ENCODE measurements at regions of chr2 and their contacts with region 1.

Region 1: DNA sequence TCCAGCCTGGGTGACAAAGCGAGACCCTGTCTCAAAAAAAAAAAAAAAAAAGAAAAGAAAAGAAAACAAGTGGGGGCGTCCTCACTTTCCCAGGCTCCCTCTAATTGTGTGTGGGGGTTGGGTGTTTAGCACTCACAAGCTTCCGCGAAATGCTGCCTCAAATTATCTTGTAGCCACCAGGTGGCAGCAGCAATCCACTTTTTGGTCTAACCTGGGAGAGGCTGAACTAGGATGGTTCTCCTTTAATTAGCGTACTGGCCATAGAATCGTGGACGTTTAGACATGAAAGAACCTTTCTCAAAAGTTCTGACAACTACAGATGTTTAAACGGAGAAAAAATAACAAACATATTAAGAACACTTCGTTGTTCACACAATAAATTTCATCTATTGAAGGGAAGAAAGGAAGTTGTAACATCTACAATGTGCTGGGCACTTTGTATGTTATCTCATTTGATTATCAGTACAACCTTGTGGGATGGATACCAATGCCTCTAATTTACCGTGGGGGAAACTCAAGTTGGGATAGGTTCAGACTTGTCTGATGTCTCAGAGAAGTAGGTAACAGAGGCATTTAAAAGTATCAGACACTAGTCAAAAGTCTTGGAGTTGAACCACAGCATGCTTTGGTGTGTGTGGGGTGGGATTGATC is 122.7 kb upstream of the NABP1 start:
- DNase-seq: peak; percentile 58 to 65
- H3K4me3 ChIP-seq: peak overlapping the region; percentile 26; the same call in 1 of the 2 replicates
- H3K27ac ChIP-seq: no peak overlapping the region
- H3K4me1 ChIP-seq: peaks cover 4% of the 10 kb centered on the region
- H3K27me3 ChIP-seq: no peaks in the 10 kb centered on the region
- CTCF ChIP-seq: peak; percentile 78

Region 2: DNA sequence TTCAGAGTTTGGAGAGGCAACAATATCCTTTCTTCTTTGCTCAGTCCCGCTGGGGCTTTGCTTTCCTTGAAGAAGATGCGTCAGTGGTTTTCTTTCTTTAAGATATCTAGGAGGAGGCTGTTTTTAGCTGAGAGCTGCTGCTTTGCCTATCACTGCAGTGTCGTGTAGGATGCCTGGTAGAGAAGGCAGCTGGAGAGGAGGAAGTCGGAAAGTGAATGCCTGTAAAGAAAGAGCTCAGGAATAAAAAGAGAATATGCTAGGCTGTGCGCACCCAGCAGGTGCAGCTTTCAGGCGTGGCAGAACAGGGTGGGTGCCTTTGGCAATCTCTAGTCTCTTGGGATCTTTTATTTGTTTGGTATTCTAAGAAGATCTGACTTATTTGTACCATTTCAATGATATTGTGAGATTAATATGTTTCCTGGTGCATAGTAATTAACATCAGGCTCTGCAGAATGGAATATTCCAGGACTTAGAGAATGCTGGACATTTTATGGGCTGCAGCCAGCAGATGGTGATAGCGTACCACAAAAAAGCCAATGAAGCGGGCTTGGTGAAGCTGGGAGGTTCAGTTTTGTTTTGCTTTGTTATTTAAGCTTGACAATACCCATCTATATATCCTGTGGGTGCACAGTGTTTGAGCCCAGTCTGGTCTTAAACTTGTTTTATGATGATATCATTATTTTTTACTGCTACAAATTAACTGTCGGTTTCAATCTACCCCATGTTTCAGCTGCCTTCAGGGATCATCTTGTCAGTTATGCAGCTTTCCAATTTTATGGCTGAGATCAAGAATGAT is 256.8 kb after region 1 on chr2:
- CTCF ChIA-PET with region 1: interaction called, 3 read pairs
- POLR2A ChIA-PET with region 1: no interaction called
- intact Hi-C with region 1: loop called (anchors 1 kb)
- DNase-seq: peak; percentile 39 to 43
- H3K4me3 ChIP-seq: no peak overlapping the region
- H3K27ac ChIP-seq: no peak overlapping the region
- H3K4me1 ChIP-seq: no peaks in the 10 kb centered on the region
- H3K27me3 ChIP-seq: no peaks in the 10 kb centered on the region
- CTCF ChIP-seq: peak; percentile 80

Measured in PC-9 (cell line).